Mammary epithelial cell (primary cell): ENCODE measurements at regions of chr10 and their contacts with region 1.

Region 1: GRCh38 chr10:3043512-3044368 is 23.6 kb upstream of the PFKP start:
- DNase-seq: peak; percentile 56
- H3K4me3 ChIP-seq: no peak overlapping the region
- H3K27ac ChIP-seq: no peak overlapping the region
- H3K4me1 ChIP-seq: peaks cover 15% of the 10 kb centered on the region
- H3K27me3 ChIP-seq: no peaks in the 10 kb centered on the region
- CTCF ChIP-seq: peak; percentile 80 to 87

Region 2: DNA sequence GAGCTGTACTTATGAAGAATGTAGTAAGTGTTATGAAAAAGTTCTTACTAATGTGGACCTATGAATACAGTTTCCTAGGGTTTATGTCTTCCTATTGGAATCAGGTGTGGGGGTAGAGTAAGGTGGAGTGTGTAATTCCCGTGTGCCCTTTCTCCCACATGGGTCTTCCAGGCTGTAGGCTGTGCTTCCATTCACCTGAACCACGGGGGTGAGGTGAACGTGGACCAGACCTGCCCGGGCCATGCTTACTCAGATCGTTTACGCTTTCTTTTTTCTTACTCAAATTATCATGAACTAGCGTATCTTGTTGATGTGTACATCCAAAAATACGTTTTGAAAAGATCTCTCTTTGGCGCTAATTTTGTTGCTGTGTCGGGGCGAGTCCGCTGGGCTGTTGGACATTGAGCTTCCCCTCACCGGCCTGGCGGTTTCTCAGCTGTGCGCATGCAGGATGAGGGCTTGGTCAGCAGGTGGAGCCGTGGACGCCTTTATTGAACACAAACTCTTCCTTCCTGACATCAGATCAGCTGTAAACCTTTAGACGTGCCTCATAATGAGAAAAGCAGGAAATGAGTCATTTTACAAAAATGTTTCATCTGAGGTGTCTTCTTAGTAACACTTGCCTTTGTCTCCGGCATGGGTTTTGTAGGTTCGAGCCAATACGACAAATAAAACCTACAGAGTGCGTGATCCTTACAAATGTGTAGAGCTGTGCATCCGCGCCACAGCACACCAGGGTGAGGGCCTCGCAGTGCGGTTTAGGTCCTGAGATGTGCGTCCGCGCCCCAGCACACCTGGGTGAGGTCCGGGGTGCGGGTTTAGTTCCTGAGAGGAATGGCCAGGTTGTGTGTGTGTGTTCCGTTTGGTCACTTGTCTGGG is 1933.7 kb before region 1 on chr10:
- CTCF ChIA-PET with region 1: no interaction called
- dilution Hi-C with region 1: no loop called
- in situ Hi-C with region 1: no loop called
- intact Hi-C with region 1: loop called (anchors 1 kb)
- DNase-seq: peak; percentile 83
- H3K4me3 ChIP-seq: no peak overlapping the region
- H3K27ac ChIP-seq: peak overlapping the region; percentile 31
- H3K4me1 ChIP-seq: peaks cover 11% of the 10 kb centered on the region
- H3K27me3 ChIP-seq: no peaks in the 10 kb centered on the region
- CTCF ChIP-seq: peak; percentile 72 to 74

Region 3: GRCh38 chr10:2137549-2138174 is 906.1 kb before region 1 on chr10:
- CTCF ChIA-PET with region 1: no interaction called
- dilution Hi-C with region 1: no loop called
- in situ Hi-C with region 1: no loop called
- intact Hi-C with region 1: loop called (anchors 1 kb)
- DNase-seq: no peak
- H3K4me3 ChIP-seq: no peak overlapping the region
- H3K27ac ChIP-seq: no peak overlapping the region
- H3K4me1 ChIP-seq: no peaks in the 10 kb centered on the region
- H3K27me3 ChIP-seq: no peaks in the 10 kb centered on the region
- CTCF ChIP-seq: peak; percentile 61 to 72

Region 4: GRCh38 chr10:2927958-2928840 is 115.5 kb before region 1 on chr10:
- CTCF ChIA-PET with region 1: interaction called, 3 read pairs
- dilution Hi-C with region 1: no loop called
- in situ Hi-C with region 1: loop called in 1 of 2 experiments (anchors 25 kb)
- intact Hi-C with region 1: loop called (anchors 1 kb)
- DNase-seq: peak; percentile 32
- H3K4me3 ChIP-seq: no peak overlapping the region
- H3K27ac ChIP-seq: no peak overlapping the region
- H3K4me1 ChIP-seq: no peaks in the 10 kb centered on the region
- H3K27me3 ChIP-seq: no peaks in the 10 kb centered on the region
- CTCF ChIP-seq: peak; percentile 58 to 78